ENCODE measurements at regions of chr1 and their contacts with region 1.

Region 1: GRCh38 chr1:96370752-96371151 is 350.8 kb upstream of the PTBP2 start:
- DNase-seq: no peak
- ATAC-seq: no peak
- H3K4me3 Mint-ChIP-seq: no peak overlapping the region
- H3K27ac Mint-ChIP-seq: no peak overlapping the region
- H3K4me1 Mint-ChIP-seq: no peaks in the 10 kb centered on the region
- H3K27me3 Mint-ChIP-seq: no peaks in the 10 kb centered on the region

Region 2: DNA sequence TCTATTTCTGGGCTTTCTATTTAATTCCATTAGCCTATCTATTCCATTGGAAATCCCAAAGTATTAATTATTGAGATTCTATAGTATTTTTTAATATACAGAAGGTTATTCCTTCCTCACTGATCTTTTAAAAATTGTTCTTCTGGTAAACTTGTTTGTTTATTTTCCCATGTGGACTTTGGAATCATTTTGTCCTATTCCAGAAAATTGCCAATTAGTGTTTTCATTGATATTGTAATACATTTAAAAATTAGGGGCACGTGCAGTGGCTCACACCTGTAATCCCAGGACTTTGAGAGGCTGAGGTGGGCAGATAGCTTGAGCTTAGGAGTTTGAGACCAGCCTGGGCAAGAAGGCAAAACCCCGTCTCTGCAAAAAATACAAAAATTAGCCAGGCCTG is 1262.0 kb before region 1 on chr1:
- CTCF ChIA-PET with region 1: no interaction called
- POLR2A ChIA-PET with region 1: no interaction called
- intact Hi-C with region 1: loop called in 1 of 2 experiments (anchors 10 kb)
- DNase-seq: no peak
- ATAC-seq: no peak
- H3K4me3 Mint-ChIP-seq: no peak overlapping the region
- H3K27ac Mint-ChIP-seq: no peak overlapping the region
- H3K4me1 Mint-ChIP-seq: no peaks in the 10 kb centered on the region
- H3K27me3 Mint-ChIP-seq: peaks cover 14% of the 10 kb centered on the region